ENCODE measurements at regions of chr1 and their contacts with region 1.

Region 1: GRCh38 chr1:111507411-111508201 is 4.2 kb upstream of the ADORA3 start:
- DNase-seq: peak; percentile 48 to 78 (median 49)
- H3K4me3 ChIP-seq: peak overlapping the region; percentile 31 to 50
- H3K4me3 Mint-ChIP-seq: peak overlapping the region; percentile 63 to 89 (median 86)
- H3K27ac ChIP-seq: peak overlapping the region; percentile 76
- H3K27ac Mint-ChIP-seq: peak overlapping the region in 6 of 7 donors; percentile 93 to 98 (median 96)
- H3K4me1 ChIP-seq: peaks cover 96% of the 10 kb centered on the region
- H3K4me1 Mint-ChIP-seq: peaks cover 41 to 61% (median 53%) of the 10 kb centered on the region in 4 donors
- H3K27me3 ChIP-seq: no peaks in the 10 kb centered on the region
- H3K27me3 Mint-ChIP-seq: no peaks in the 10 kb centered on the region

Region 2: DNA sequence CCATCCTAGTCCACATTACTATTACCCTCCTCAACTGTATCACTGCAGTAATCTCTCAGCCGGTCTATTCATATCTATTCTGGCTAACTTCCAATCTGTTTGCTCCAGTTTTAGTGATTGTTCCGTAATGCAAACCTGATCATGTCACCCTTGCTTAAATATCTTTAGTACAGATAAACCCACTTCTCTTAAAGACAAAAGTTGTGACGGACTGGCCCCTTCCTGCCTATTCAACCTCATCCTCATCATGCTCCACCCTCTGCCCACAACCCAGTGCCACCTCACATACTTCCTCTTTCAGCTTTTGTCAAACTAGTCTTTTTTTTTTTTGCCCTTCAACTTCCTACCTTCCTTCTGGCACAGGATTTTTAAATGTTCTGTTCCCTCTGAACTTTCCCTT is 36.6 kb before region 1 on chr1:
- CTCF ChIA-PET with region 1: interaction called, 116 read pairs
- POLR2A ChIA-PET with region 1: interaction called, 170 read pairs
- intact Hi-C with region 1: loop called (anchors 2 kb)
- DNase-seq: peak; percentile 84 to 95 (median 91)
- H3K4me3 ChIP-seq: peak overlapping the region; percentile 9 to 39
- H3K4me3 Mint-ChIP-seq: no peak overlapping the region
- H3K27ac ChIP-seq: peak overlapping the region; percentile 68
- H3K27ac Mint-ChIP-seq: no peak overlapping the region
- H3K4me1 ChIP-seq: peaks cover 80% of the 10 kb centered on the region
- H3K4me1 Mint-ChIP-seq: peaks cover 18 to 29% (median 25%) of the 10 kb centered on the region in 4 donors
- H3K27me3 ChIP-seq: no peaks in the 10 kb centered on the region
- H3K27me3 Mint-ChIP-seq: no peaks in the 10 kb centered on the region

Region 3: GRCh38 chr1:111559736-111560279 is 52.2 kb after region 1 on chr1:
- CTCF ChIA-PET with region 1: interaction called, 14 read pairs
- POLR2A ChIA-PET with region 1: interaction called, 4 read pairs
- intact Hi-C with region 1: no loop called
- DNase-seq: no peak
- H3K4me3 ChIP-seq: no peak overlapping the region
- H3K4me3 Mint-ChIP-seq: no peak overlapping the region
- H3K27ac ChIP-seq: no peak overlapping the region
- H3K27ac Mint-ChIP-seq: no peak overlapping the region
- H3K4me1 ChIP-seq: no peaks in the 10 kb centered on the region
- H3K4me1 Mint-ChIP-seq: peaks cover 0 to 8% (median 2%) of the 10 kb centered on the region in 4 donors
- H3K27me3 ChIP-seq: no peaks in the 10 kb centered on the region
- H3K27me3 Mint-ChIP-seq: no peaks in the 10 kb centered on the region

Region 4: GRCh38 chr1:111619635-111620440 is 112.2 kb after region 1 on chr1 and contains the start of gene RAP1A:
- CTCF ChIA-PET with region 1: interaction called, 44 read pairs
- POLR2A ChIA-PET with region 1: interaction called, 31 read pairs
- intact Hi-C with region 1: loop called (anchors 10 kb)
- DNase-seq: peak; percentile 88 to 91 (median 88)
- H3K4me3 ChIP-seq: peak within 1 kb of the TSS; percentile 79 to 90
- H3K4me3 Mint-ChIP-seq: peak within 1 kb of the TSS; percentile 95 to 100 (median 98)
- H3K27ac ChIP-seq: peak within 1 kb of the TSS; percentile 84
- H3K27ac Mint-ChIP-seq: peak within 1 kb of the TSS; percentile 93 to 98 (median 97)
- H3K4me1 ChIP-seq: peaks cover 81% of the 10 kb centered on the region
- H3K4me1 Mint-ChIP-seq: peaks cover 59 to 83% (median 71%) of the 10 kb centered on the region in 4 donors
- H3K27me3 ChIP-seq: no peaks in the 10 kb centered on the region
- H3K27me3 Mint-ChIP-seq: no peaks in the 10 kb centered on the region
- total RNA-seq, gene RAP1A: 130 to 134 TPM

Region 5: DNA sequence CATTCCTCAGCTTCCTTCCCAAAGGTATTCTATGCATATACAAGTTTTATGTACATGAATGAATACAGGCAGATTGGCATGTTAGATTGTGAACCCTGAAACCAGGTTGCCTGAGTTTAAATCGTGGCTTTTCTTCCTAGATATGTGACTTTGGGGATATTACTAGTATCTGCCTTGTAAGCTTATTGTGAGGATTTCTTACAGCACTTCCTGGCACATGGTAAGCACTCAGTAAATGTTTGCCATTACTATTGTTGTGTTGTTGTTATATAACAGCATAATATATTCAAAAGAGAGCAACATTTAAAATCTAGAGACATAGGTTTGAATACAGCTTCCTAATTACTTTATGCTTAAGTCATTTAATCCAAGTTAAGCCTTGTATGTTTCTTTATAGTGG is 157.0 kb after region 1 on chr1:
- CTCF ChIA-PET with region 1: interaction called, 22 read pairs
- POLR2A ChIA-PET with region 1: interaction called, 8 read pairs
- intact Hi-C with region 1: no loop called
- DNase-seq: no peak
- H3K4me3 ChIP-seq: no peak overlapping the region
- H3K4me3 Mint-ChIP-seq: peak overlapping the region; percentile 1 to 79 (median 26)
- H3K27ac ChIP-seq: no peak overlapping the region
- H3K27ac Mint-ChIP-seq: peak overlapping the region; percentile 14 to 88 (median 73)
- H3K4me1 ChIP-seq: peaks cover 87% of the 10 kb centered on the region
- H3K4me1 Mint-ChIP-seq: peaks cover 43 to 70% (median 56%) of the 10 kb centered on the region in 4 donors
- H3K27me3 ChIP-seq: no peaks in the 10 kb centered on the region
- H3K27me3 Mint-ChIP-seq: no peaks in the 10 kb centered on the region

Region 6: GRCh38 chr1:111709986-111710385 is 202.4 kb after region 1 on chr1:
- CTCF ChIA-PET with region 1: interaction called, 60 read pairs
- POLR2A ChIA-PET with region 1: interaction called, 11 read pairs
- intact Hi-C with region 1: loop called (anchors 2 kb)
- DNase-seq: no peak
- H3K4me3 ChIP-seq: no peak overlapping the region
- H3K4me3 Mint-ChIP-seq: no peak overlapping the region
- H3K27ac ChIP-seq: no peak overlapping the region
- H3K27ac Mint-ChIP-seq: peak overlapping the region in 6 of 7 donors; percentile 0 to 58 (median 13)
- H3K4me1 ChIP-seq: peaks cover 3% of the 10 kb centered on the region
- H3K4me1 Mint-ChIP-seq: peaks cover 0 to 7% (median 5%) of the 10 kb centered on the region in 4 donors
- H3K27me3 ChIP-seq: no peaks in the 10 kb centered on the region
- H3K27me3 Mint-ChIP-seq: no peaks in the 10 kb centered on the region

Region 7: GRCh38 chr1:111769517-111770146 is 262.0 kb after region 1 on chr1:
- CTCF ChIA-PET with region 1: interaction called, 43 read pairs
- POLR2A ChIA-PET with region 1: interaction called, 12 read pairs
- intact Hi-C with region 1: loop called (anchors 1 kb)
- DNase-seq: peak; percentile 54 to 64 (median 59)
- H3K4me3 ChIP-seq: no peak overlapping the region
- H3K4me3 Mint-ChIP-seq: no peak overlapping the region
- H3K27ac ChIP-seq: no peak overlapping the region
- H3K27ac Mint-ChIP-seq: peak overlapping the region in 5 of 7 donors; percentile 7 to 55 (median 38)
- H3K4me1 ChIP-seq: no peaks in the 10 kb centered on the region
- H3K4me1 Mint-ChIP-seq: peaks cover 0 to 3% (median under 1%) of the 10 kb centered on the region in 4 donors
- H3K27me3 ChIP-seq: no peaks in the 10 kb centered on the region
- H3K27me3 Mint-ChIP-seq: no peaks in the 10 kb centered on the region